ENCODE measurements at regions of chr15 and their contacts with region 1.

Region 1: GRCh38 chr15:85330901-85331588 is 49.4 kb upstream of the AKAP13 start:
- DNase-seq: peak; percentile 90
- ATAC-seq: peak; percentile 83
- H3K4me3 ChIP-seq: peak overlapping the region; percentile 70
- H3K27ac ChIP-seq: peak overlapping the region; percentile 84
- H3K4me1 ChIP-seq: peaks cover 44% of the 10 kb centered on the region
- H3K27me3 ChIP-seq: no peaks in the 10 kb centered on the region
- CTCF ChIP-seq: peak; percentile 89 to 99 (median 96)
- EP300 ChIP-seq: peak in 1 of 2 experiments; percentile 56; a peak in 1 of 4 replicates
- POLR2A ChIP-seq: peak; percentile 61
- RAD21 ChIP-seq: peak; percentile 98

Region 2: DNA sequence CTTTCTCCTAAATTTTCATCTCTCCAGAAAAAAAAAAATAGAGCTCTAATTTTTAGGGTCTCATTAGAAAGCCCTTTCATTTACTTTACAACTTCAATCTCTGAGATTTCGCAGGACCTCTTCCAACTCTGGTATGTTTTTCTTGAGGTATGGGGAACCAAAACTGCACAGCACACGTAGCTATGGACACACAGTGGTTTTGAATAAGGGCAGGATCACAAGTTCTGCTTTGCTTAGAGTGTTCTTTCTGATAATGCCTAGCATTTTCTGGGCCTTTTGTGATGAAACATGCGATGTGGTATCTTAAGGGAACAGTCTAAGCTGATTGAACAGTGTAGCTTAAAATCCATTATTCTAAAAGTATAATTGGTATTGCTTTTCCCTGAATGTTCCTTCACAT is 557.3 kb before region 1 on chr15:
- CTCF ChIA-PET with region 1: no interaction called
- POLR2A ChIA-PET with region 1: no interaction called
- RAD21 ChIA-PET with region 1: no interaction called
- SMC1A ChIA-PET with region 1: no interaction called
- in situ Hi-C with region 1: no loop called
- intact Hi-C with region 1: no loop called
- DNase-seq: no peak
- ATAC-seq: peak; percentile 74
- H3K4me3 ChIP-seq: no peak overlapping the region
- H3K27ac ChIP-seq: no peak overlapping the region
- H3K4me1 ChIP-seq: no peaks in the 10 kb centered on the region
- H3K27me3 ChIP-seq: no peaks in the 10 kb centered on the region
- CTCF ChIP-seq: no peak
- EP300 ChIP-seq: no peak
- POLR2A ChIP-seq: no peak
- RAD21 ChIP-seq: no peak

Region 3: GRCh38 chr15:85296615-85297402 is 34.2 kb before region 1 on chr15:
- CTCF ChIA-PET with region 1: interaction called, 42 read pairs
- POLR2A ChIA-PET with region 1: interaction called, 7 read pairs
- RAD21 ChIA-PET with region 1: interaction called, 27 read pairs
- SMC1A ChIA-PET with region 1: interaction called, 23 read pairs
- in situ Hi-C with region 1: no loop called
- intact Hi-C with region 1: loop called (anchors 1 kb)
- DNase-seq: peak; percentile 68
- ATAC-seq: peak; percentile 98
- H3K4me3 ChIP-seq: no peak overlapping the region
- H3K27ac ChIP-seq: no peak overlapping the region
- H3K4me1 ChIP-seq: no peaks in the 10 kb centered on the region
- H3K27me3 ChIP-seq: no peaks in the 10 kb centered on the region; a peak in 1 of 4 replicates
- CTCF ChIP-seq: peak; percentile 76 to 79 (median 77)
- EP300 ChIP-seq: no peak
- POLR2A ChIP-seq: no peak
- RAD21 ChIP-seq: peak; percentile 97

Region 4: DNA sequence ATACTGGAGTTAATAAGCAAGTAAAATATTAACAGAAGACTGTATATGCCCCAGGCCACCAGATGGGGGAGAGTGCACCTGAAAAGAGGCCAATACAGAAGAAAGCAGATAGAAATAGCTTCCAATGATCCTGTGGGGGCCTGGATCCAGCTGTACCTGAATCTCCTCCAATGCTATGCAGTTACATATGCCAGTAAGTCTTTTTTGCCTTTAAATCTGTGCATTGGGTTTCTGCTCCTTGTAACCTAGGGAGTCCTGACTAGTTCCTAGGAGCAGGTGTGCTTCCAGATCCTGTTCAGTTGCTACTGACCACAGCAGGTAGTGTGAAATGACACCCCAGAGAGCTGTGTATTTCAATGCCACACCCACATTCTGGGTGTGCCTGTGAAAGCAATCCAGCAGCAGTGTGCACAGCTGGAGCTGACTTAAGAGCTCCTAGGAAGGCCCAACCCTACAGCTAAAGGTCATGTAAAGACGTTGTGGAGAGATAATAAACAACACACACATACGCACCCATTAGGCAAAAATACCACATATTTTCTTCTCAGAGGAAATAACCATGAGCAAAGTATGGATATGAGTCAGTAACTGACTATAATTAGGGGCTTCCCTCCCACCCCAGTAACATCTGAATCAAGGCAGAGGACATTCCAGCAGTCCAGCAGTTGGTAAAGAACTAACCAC is 12.9 kb before region 1 on chr15:
- CTCF ChIA-PET with region 1: interaction called, 115 read pairs
- POLR2A ChIA-PET with region 1: interaction called, 13 read pairs
- RAD21 ChIA-PET with region 1: interaction called, 49 read pairs
- SMC1A ChIA-PET with region 1: interaction called, 177 read pairs
- in situ Hi-C with region 1: no loop called
- intact Hi-C with region 1: no loop called
- DNase-seq: peak; percentile 83
- ATAC-seq: peak; percentile 97
- H3K4me3 ChIP-seq: no peak overlapping the region
- H3K27ac ChIP-seq: peak overlapping the region; percentile 60
- H3K4me1 ChIP-seq: peaks cover 32% of the 10 kb centered on the region
- H3K27me3 ChIP-seq: no peaks in the 10 kb centered on the region
- CTCF ChIP-seq: peak in 2 of 3 experiments; percentile 19 to 28; a peak in 2 of 6 replicates
- EP300 ChIP-seq: peak; percentile 96 to 97
- POLR2A ChIP-seq: no peak
- RAD21 ChIP-seq: peak; percentile 45

Region 5: DNA sequence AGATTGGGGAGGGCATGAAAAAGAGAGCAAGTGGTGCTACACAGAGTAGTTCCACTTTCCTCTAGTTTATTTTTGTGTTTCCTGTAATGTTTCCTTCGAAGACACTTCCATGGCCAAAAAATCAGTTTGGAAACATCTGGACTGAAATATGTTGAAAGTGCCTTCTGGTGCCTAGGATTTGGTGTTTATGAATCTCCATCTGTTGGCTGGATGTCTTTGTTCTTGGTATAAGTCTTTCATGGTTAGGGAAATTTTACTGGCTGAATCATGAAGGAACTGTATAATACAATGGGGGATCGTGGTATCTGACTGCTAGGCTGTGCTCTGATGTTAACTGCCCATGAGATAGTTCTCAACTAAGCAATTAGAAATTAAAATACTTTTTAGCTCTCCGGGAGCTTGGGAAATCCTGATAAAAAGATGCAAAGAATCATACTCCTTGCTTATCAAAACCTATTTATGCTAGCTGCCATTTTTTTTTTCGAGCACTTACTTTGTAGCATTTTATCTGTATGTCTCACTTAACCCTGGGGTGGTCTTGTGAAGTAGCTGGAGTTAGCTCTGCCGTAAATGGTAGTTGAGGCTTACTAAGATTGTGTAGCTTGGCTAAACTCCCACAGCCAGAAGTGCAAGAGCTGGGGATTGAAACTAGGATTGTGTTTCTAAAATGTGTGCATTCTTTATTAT is 71.3 kb after region 1 on chr15:
- CTCF ChIA-PET with region 1: interaction called, 119 read pairs
- POLR2A ChIA-PET with region 1: interaction called, 5 read pairs
- RAD21 ChIA-PET with region 1: interaction called, 40 read pairs
- SMC1A ChIA-PET with region 1: interaction called, 51 read pairs
- in situ Hi-C with region 1: no loop called
- intact Hi-C with region 1: no loop called
- DNase-seq: no peak
- ATAC-seq: peak; percentile 64
- H3K4me3 ChIP-seq: peak overlapping the region; percentile 32; the same call in 1 of the 2 replicates
- H3K27ac ChIP-seq: peak overlapping the region; percentile 75
- H3K4me1 ChIP-seq: peaks cover 58% of the 10 kb centered on the region
- H3K27me3 ChIP-seq: no peaks in the 10 kb centered on the region
- CTCF ChIP-seq: no peak
- EP300 ChIP-seq: no peak
- POLR2A ChIP-seq: no peak
- RAD21 ChIP-seq: no peak

Region 6: DNA sequence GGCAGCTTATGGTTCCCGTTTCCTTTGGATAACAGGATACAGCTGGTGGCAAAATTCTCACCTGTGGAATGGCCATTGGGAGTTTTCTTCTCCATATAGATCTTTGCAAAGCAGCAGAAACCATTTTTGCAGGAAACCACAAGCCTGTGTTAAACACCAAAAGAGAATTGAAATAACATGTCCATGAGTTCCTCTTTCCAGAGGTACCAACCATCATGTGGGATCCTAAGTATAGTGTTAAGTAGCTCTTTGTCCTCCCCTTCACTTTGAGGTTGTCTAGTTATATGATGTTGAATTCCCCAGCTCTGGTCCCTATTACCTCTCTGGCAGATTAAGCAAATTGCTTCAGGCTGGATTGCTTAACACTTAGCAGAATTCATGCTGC is 144.3 kb after region 1 on chr15:
- CTCF ChIA-PET with region 1: interaction called, 27 read pairs
- POLR2A ChIA-PET with region 1: no interaction called
- RAD21 ChIA-PET with region 1: interaction called, 12 read pairs
- SMC1A ChIA-PET with region 1: interaction called, 13 read pairs
- in situ Hi-C with region 1: no loop called
- intact Hi-C with region 1: no loop called
- DNase-seq: peak; percentile 85
- ATAC-seq: peak; percentile 89
- H3K4me3 ChIP-seq: peak overlapping the region; percentile 39; the same call in 1 of the 2 replicates
- H3K27ac ChIP-seq: peak overlapping the region; percentile 90
- H3K4me1 ChIP-seq: peaks cover 42% of the 10 kb centered on the region
- H3K27me3 ChIP-seq: no peaks in the 10 kb centered on the region
- CTCF ChIP-seq: no peak
- EP300 ChIP-seq: peak; percentile 26 to 44; a peak in 1 of 4 replicates
- POLR2A ChIP-seq: no peak
- RAD21 ChIP-seq: 0 out of 2 replicates have a peak, but pooled peaks have one; percentile 8

Region 7: DNA sequence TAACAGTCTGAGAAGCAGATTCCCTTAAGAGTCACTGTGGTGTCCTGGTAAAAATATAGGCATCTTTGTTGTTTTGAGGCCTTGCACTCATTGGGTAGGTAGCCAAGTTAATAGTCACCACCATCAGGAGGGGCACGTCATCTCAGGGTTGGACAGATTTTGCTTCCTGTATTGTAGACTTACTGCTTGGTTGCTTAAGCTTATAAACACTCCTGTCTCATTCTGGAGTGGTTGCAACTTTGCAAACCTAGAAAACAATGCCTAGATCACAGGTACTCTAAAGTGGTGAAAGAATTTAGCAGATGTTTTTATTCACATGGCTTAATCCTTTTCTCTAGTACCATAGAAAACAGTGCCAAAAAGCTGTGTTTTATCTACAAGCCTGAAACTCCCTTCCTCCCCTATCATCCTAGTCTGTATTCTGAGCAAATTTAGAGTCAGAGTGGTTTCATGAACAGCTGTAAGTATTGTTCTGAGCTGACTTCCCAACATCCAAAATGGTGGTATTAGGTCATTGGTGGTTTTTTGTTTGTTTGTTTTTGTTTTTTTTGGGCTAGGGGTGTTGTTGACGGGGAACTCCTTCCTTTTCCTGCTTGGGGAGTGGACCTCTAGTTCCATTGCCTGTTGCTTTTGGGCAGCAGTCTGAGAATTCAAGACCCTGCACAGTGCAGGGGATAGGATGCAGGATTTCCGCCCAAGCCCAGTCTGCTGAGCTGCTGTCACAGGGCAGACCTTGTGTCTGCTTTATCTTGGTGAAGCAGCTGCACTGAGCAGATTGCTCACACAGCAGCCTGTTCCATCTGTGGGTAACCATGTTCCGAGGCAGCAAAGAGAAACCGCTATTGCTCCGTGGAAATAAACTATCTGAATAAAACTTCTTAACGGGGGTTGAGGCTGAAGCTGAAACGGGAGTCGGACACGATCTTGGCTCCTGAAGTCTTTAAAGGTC is 251.4 kb after region 1 on chr15:
- CTCF ChIA-PET with region 1: interaction called, 3 read pairs
- POLR2A ChIA-PET with region 1: interaction called, 3 read pairs
- RAD21 ChIA-PET with region 1: no interaction called
- SMC1A ChIA-PET with region 1: no interaction called
- in situ Hi-C with region 1: no loop called
- intact Hi-C with region 1: loop called (anchors 5 kb)
- DNase-seq: peak; percentile 34
- ATAC-seq: peak; percentile 51
- H3K4me3 ChIP-seq: peak overlapping the region; percentile 63
- H3K27ac ChIP-seq: peak overlapping the region; percentile 82
- H3K4me1 ChIP-seq: peaks cover 63% of the 10 kb centered on the region
- H3K27me3 ChIP-seq: no peaks in the 10 kb centered on the region
- CTCF ChIP-seq: no peak
- EP300 ChIP-seq: no peak
- POLR2A ChIP-seq: peak; percentile 81
- RAD21 ChIP-seq: no peak

Region 8: DNA sequence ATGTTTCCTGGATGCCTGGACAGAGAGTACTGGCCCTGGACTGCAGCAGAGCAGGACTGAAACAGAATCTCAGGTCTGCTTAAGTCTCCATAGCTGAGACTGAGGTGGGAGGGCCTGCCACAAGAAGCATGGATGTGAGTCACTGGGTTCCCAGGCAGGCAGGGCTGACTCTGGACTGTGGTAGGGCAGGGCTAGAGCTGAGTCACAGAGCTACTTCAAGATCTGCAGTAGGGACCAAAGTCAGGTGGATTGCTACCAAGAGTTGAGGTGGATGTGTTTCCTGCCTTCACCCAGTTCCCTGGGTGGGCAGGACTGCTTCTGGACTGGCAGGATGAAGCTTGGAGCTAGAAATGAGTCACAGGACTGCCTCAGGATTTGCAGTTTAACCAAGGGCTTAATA is 1031.5 kb after region 1 on chr15:
- CTCF ChIA-PET with region 1: no interaction called
- POLR2A ChIA-PET with region 1: no interaction called
- RAD21 ChIA-PET with region 1: no interaction called
- SMC1A ChIA-PET with region 1: no interaction called
- in situ Hi-C with region 1: no loop called
- intact Hi-C with region 1: no loop called
- DNase-seq: no peak
- ATAC-seq: no peak
- H3K4me3 ChIP-seq: no peak overlapping the region
- H3K27ac ChIP-seq: no peak overlapping the region
- H3K4me1 ChIP-seq: no peaks in the 10 kb centered on the region
- H3K27me3 ChIP-seq: no peaks in the 10 kb centered on the region
- CTCF ChIP-seq: no peak
- EP300 ChIP-seq: no peak
- POLR2A ChIP-seq: no peak
- RAD21 ChIP-seq: no peak